Naive thymus-derived CD4-positive, alpha-beta T cell (primary cell): ENCODE measurements at regions of chr13 and their contacts with region 1.

Region 1: DNA sequence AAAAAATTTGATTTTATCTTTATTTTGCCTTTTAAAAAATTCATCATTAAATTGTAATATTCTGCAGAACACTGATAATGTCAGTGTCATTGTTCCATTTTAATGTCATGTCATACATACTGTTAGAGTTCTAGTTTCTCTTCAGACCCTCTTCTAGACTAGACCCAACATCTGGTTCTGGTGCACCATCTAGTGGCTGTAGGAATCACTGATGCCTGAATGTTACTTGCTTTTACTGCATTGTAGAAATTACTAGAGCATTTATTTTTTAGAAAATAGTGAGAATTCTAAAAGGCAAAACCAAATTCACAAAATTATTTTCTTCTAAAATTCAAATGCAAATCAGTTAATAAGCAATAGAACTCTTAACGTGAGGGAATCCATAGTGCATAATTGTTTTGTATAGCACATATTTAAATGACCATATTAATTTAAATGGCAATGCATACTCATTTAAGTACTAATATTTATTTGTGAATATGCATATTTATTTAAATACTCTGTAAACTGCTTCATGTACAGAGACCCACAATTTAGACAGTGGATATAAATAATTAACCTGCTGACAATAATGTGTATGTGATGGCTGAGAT is 425.7 kb downstream of the KLF12 start:
- DNase-seq: peak in 7 of 9 donors; percentile 58 to 77 (median 68)
- ATAC-seq: peak; percentile 89
- H3K4me3 ChIP-seq: no peak overlapping the region
- H3K4me3 Mint-ChIP-seq: no peak overlapping the region
- H3K27ac ChIP-seq: no peak overlapping the region
- H3K27ac Mint-ChIP-seq: peak overlapping the region in 4 of 9 donors; percentile 46 to 74 (median 61)
- H3K4me1 ChIP-seq: peaks cover 4% of the 10 kb centered on the region in 2 donors
- H3K4me1 Mint-ChIP-seq: peaks cover 11 to 44% (median 24%) of the 10 kb centered on the region in 7 donors
- H3K27me3 ChIP-seq: no peaks in the 10 kb centered on the region
- H3K27me3 Mint-ChIP-seq: no peaks in the 10 kb centered on the region

Region 2: GRCh38 chr13:72781451-72782439 is 926.7 kb before region 1 on chr13 and contains the starts of genes DIS3 and PIBF1:
- CTCF ChIA-PET with region 1: no interaction called
- POLR2A ChIA-PET with region 1: no interaction called
- intact Hi-C with region 1: loop called in 1 of 2 experiments (anchors 1 kb)
- DNase-seq: peak; percentile 82 to 97 (median 94)
- ATAC-seq: peak; percentile 99
- H3K4me3 ChIP-seq: peak within 1 kb of the TSS; percentile 94
- H3K4me3 Mint-ChIP-seq: peak within 1 kb of the TSS; percentile 96 to 100 (median 99)
- H3K27ac ChIP-seq: peak within 1 kb of the TSS; percentile 87
- H3K27ac Mint-ChIP-seq: peak within 1 kb of the TSS; percentile 95 to 100 (median 98)
- H3K4me1 ChIP-seq: peaks cover 35 to 37% of the 10 kb centered on the region in 2 donors
- H3K4me1 Mint-ChIP-seq: peaks cover 44 to 84% (median 71%) of the 10 kb centered on the region in 7 donors
- H3K27me3 ChIP-seq: no peaks in the 10 kb centered on the region
- H3K27me3 Mint-ChIP-seq: no peaks in the 10 kb centered on the region
- total RNA-seq, gene DIS3: 24.8 to 44.8 (median 39.2) TPM
- total RNA-seq, gene PIBF1: 27.3 to 40.1 (median 31.6) TPM

Region 3: DNA sequence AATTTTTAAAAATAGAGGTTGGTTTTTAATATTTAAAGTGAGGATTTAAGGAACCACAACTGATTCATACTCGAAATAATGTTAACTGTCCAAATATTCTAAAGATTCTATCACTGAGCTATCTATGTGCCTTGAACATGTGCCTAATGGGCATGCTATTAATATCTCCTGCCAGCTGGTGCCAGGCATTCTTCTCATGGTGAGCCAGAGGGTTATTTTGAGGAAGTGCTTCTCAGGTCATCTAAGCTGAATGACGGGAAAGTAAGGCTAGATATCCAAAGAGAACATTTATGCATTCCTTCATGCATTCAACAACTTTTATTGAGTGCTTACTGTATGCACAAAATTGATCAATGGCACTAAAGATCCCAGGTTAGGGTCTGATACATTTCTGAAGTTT is 788.4 kb before region 1 on chr13:
- CTCF ChIA-PET with region 1: no interaction called
- POLR2A ChIA-PET with region 1: no interaction called
- intact Hi-C with region 1: loop called in 1 of 2 experiments (anchors 10 kb)
- DNase-seq: no peak
- ATAC-seq: no peak
- H3K4me3 ChIP-seq: no peak overlapping the region
- H3K4me3 Mint-ChIP-seq: no peak overlapping the region
- H3K27ac ChIP-seq: no peak overlapping the region
- H3K27ac Mint-ChIP-seq: no peak overlapping the region
- H3K4me1 ChIP-seq: no peaks in the 10 kb centered on the region
- H3K4me1 Mint-ChIP-seq: peaks cover 0 to 4% (median 0%) of the 10 kb centered on the region in 7 donors
- H3K27me3 ChIP-seq: no peaks in the 10 kb centered on the region
- H3K27me3 Mint-ChIP-seq: no peaks in the 10 kb centered on the region

Region 4: GRCh38 chr13:73119612-73120011 is 588.9 kb before region 1 on chr13:
- CTCF ChIA-PET with region 1: no interaction called
- POLR2A ChIA-PET with region 1: no interaction called
- intact Hi-C with region 1: loop called in 1 of 2 experiments (anchors 10 kb)
- DNase-seq: no peak
- ATAC-seq: no peak
- H3K4me3 ChIP-seq: no peak overlapping the region
- H3K4me3 Mint-ChIP-seq: no peak overlapping the region
- H3K27ac ChIP-seq: no peak overlapping the region
- H3K27ac Mint-ChIP-seq: no peak overlapping the region
- H3K4me1 ChIP-seq: no peaks in the 10 kb centered on the region
- H3K4me1 Mint-ChIP-seq: no peaks in the 10 kb centered on the region
- H3K27me3 ChIP-seq: no peaks in the 10 kb centered on the region
- H3K27me3 Mint-ChIP-seq: no peaks in the 10 kb centered on the region

Region 5: DNA sequence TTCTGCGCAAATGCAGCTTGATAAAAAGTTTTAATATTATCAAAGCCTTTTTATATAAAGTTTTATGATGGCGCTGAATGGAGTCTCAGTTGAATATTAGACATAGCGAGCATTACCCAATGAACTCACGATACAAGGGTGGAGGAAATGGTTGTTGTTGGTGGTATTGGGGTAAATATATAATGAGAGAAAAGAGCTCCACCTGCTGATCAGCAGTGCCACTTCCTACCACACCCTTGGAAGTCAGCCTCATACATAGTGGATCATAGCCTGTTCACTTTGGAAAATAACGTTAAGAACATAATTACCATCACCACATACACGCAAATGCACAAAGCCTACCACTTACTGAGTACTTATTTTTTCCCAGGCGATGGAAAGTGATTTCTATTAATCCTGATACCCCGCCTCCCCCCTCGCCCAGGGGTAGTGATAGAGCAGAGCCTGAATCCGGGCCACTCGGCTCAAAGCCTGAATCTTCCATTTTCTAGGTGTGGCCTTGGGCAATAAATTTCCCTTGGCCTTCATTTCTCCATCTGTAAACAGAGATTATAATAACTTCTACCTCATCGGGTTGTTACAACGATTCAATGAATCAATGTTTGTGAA is 291.4 kb before region 1 on chr13:
- CTCF ChIA-PET with region 1: no interaction called
- POLR2A ChIA-PET with region 1: no interaction called
- intact Hi-C with region 1: loop called (anchors 1 kb)
- DNase-seq: peak in 1 of 9 donors; percentile 1
- ATAC-seq: no peak
- H3K4me3 ChIP-seq: no peak overlapping the region
- H3K4me3 Mint-ChIP-seq: no peak overlapping the region
- H3K27ac ChIP-seq: no peak overlapping the region
- H3K27ac Mint-ChIP-seq: peak overlapping the region in 1 of 9 donors; percentile 21
- H3K4me1 ChIP-seq: no peaks in the 10 kb centered on the region
- H3K4me1 Mint-ChIP-seq: no peaks in the 10 kb centered on the region
- H3K27me3 ChIP-seq: no peaks in the 10 kb centered on the region
- H3K27me3 Mint-ChIP-seq: no peaks in the 10 kb centered on the region

Region 6: DNA sequence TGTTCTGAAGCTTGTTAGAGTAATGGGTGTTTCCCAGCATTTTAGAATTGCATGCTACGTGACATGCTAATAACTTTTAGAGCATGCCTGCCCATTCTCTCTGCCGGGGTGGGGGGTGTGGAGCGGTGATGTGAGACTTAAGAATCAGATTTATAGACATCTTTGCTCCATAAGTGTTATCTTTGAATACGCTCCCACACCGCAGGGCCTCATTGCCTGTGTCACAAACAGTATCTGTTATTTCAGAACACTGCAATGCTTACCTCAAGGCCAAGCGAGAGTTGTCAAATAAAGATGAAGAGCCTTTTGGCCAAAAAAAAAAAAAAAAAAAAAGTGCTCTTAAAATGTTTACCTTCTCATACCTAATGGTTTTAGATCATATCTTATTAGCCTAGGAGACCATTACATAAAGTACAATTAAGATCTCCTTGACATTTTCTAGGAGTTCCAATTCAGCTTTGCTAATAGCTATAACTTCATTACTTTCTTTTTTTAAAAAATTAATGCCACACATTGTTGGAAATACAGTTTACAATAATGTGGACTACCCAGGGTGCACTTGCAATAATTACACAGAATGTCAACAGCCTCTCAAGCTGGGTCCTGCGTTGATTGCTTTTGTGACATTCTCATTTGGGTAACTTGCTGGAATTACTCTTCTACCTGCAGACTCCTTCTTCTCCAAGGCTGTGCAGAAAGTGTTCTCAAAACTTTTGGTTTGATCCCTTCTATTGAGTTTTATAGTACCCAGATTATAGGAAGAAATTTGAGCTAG is 99.6 kb before region 1 on chr13:
- CTCF ChIA-PET with region 1: no interaction called
- POLR2A ChIA-PET with region 1: no interaction called
- intact Hi-C with region 1: no loop called
- DNase-seq: no peak
- ATAC-seq: no peak
- H3K4me3 ChIP-seq: no peak overlapping the region
- H3K4me3 Mint-ChIP-seq: no peak overlapping the region
- H3K27ac ChIP-seq: no peak overlapping the region
- H3K27ac Mint-ChIP-seq: no peak overlapping the region
- H3K4me1 ChIP-seq: no peaks in the 10 kb centered on the region
- H3K4me1 Mint-ChIP-seq: peaks cover 0 to 10% (median 7%) of the 10 kb centered on the region in 7 donors
- H3K27me3 ChIP-seq: no peaks in the 10 kb centered on the region
- H3K27me3 Mint-ChIP-seq: peaks cover 0 to 4% (median 0%) of the 10 kb centered on the region in 5 donors

Region 7: DNA sequence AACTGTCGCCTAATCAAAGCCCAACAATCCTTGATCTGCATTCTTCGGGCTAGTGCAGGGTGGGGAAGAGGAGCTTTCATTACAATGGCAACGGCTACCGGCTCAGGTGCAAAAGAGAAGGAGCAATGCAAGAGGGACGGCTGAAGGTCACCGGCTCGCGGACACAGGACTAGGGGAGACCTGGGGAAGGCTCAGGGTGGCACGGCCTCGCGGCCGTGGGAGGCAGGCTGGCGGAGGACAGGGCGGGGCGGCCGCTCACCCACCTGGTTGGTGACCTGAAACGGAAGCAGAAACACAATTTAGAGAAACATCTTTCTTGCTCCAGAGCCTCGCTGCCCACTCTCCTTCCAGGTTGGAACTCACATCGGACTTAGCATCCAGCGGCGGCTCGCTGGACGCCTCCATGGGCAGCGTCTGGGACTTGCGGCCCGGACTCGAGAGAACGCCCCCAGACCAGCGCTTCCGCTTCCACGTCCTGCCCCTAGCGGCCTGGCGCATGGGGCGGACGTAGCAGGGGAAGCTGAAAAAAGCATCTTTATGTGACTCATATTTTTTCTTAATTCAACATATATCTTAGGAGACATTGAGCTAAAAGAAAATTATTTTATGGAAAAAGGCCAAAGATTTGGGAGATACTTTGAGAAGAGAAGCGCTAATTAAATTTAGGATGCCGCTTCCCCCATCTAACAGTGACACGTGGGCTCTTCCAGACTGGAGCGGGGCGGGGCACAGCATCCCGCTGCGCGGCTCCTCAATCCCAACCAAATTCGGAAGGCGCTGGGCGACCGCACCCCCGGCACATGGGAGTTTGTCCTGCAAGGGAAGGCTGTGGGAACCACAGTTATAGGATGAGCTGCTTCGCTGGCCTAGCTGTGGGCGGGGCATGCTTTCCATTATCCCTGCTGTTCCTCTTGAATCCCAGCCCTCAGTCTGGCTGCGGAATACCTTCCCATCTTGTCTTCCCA is 1829.2 kb after region 1 on chr13 and contains the start of gene COMMD6:
- CTCF ChIA-PET with region 1: no interaction called
- POLR2A ChIA-PET with region 1: no interaction called
- intact Hi-C with region 1: loop called in 1 of 2 experiments (anchors 10 kb)
- DNase-seq: peak; percentile 46 to 77 (median 65)
- ATAC-seq: peak; percentile 93
- H3K4me3 ChIP-seq: peak within 1 kb of the TSS; percentile 96
- H3K4me3 Mint-ChIP-seq: peak within 1 kb of the TSS; percentile 88 to 100 (median 98)
- H3K27ac ChIP-seq: peak within 1 kb of the TSS; percentile 85
- H3K27ac Mint-ChIP-seq: peak within 1 kb of the TSS; percentile 83 to 98 (median 95)
- H3K4me1 ChIP-seq: peaks cover 12 to 26% of the 10 kb centered on the region in 2 donors
- H3K4me1 Mint-ChIP-seq: peaks cover 28 to 57% (median 45%) of the 10 kb centered on the region in 7 donors
- H3K27me3 ChIP-seq: no peaks in the 10 kb centered on the region
- H3K27me3 Mint-ChIP-seq: no peaks in the 10 kb centered on the region
- total RNA-seq, gene COMMD6: 133 to 241 (median 205) TPM